ENCODE measurements at regions of chr10 and their contacts with region 1.

Region 1: GRCh38 chr10:86535057-86535882 is 13.7 kb upstream of the WAPL start:
- DNase-seq: peak; percentile 83 to 96
- ATAC-seq: peak; percentile 72 to 73
- H3K4me3 ChIP-seq: peak overlapping the region; percentile 53 to 66 (median 58)
- H3K27ac ChIP-seq: peak overlapping the region; percentile 91 to 93 (median 92)
- H3K4me1 ChIP-seq: peaks cover 21% of the 10 kb centered on the region in 2 donors
- H3K27me3 ChIP-seq: no peaks in the 10 kb centered on the region
- CTCF ChIP-seq: no peak
- POLR2A ChIP-seq: peak; percentile 33 to 38

Region 2: GRCh38 chr10:86017841-86018734 is 517.2 kb before region 1 on chr10:
- in situ Hi-C with region 1: no loop called
- intact Hi-C with region 1: loop called (anchors 5 kb)
- DNase-seq: peak; percentile 43 to 44
- ATAC-seq: peak; percentile 61 to 91
- H3K4me3 ChIP-seq: no peak overlapping the region
- H3K27ac ChIP-seq: peak overlapping the region in 1 of 4 donors; percentile 67
- H3K4me1 ChIP-seq: peaks cover 9 to 27% of the 10 kb centered on the region in 2 donors
- H3K27me3 ChIP-seq: no peaks in the 10 kb centered on the region
- CTCF ChIP-seq: no peak
- POLR2A ChIP-seq: no peak

Region 3: DNA sequence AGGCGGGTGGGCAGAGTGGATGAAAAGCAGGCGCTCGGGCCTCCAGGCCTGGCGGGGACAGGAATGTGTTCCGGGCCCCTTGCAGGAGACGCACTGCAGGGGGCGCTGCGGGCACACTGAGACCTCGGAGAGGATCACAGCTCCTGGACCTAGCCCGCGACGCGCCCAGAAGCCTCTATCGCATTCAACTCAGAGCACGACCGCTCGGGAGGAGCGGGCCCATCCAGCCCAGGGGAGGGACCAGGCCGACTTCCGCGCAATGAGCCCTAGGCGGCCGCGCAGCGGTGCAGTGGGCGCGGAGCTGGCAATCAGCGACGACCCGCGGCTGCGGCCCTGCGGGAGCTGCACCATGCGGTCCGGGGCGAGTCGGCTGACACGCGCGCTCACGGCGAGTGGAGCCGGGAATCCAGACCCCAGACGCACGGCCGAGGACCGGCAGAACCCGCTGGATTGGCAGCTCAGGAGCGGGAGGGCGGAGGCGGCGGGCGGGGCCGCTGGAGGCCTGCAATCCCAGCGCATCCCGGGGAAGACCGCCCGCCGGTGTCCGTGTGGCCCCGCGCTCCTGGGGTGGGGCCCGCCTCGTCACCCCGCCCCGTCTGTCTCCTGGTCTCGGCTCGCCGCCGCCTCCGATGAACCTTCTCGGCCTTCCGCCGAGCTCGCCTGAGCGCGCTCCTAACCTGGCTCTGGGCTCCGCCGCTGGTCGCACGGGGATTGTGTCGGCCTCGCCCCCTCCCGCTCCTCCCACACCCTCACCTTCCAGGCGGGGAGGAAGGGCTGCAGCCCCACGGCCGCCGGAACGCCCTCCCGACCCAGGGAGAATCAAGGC is 135.2 kb before region 1 on chr10:
- in situ Hi-C with region 1: no loop called
- intact Hi-C with region 1: no loop called
- DNase-seq: peak; percentile 77 to 83
- ATAC-seq: peak; percentile 89 to 94
- H3K4me3 ChIP-seq: peak overlapping the region; percentile 56 to 92 (median 67)
- H3K27ac ChIP-seq: peak overlapping the region in 3 of 4 donors; percentile 48 to 76 (median 52)
- H3K4me1 ChIP-seq: peaks cover 11 to 29% of the 10 kb centered on the region in 2 donors
- H3K27me3 ChIP-seq: peaks cover 5 to 13% (median 13%) of the 10 kb centered on the region in 3 donors
- CTCF ChIP-seq: peak; percentile 87 to 96 (median 90)
- POLR2A ChIP-seq: no peak

Region 4: GRCh38 chr10:86439544-86439943 is 95.7 kb before region 1 on chr10:
- in situ Hi-C with region 1: no loop called
- intact Hi-C with region 1: loop called (anchors 2 kb)
- DNase-seq: peak; percentile 78 to 96
- ATAC-seq: peak; percentile 98 to 99
- H3K4me3 ChIP-seq: no peak overlapping the region
- H3K27ac ChIP-seq: peak overlapping the region; percentile 55 to 69 (median 62)
- H3K4me1 ChIP-seq: peaks cover 12 to 17% of the 10 kb centered on the region in 2 donors
- H3K27me3 ChIP-seq: no peaks in the 10 kb centered on the region
- CTCF ChIP-seq: peak in 3 of 5 experiments; percentile 21 to 24 (median 22)
- POLR2A ChIP-seq: no peak

Region 5: GRCh38 chr10:86668297-86669165 is 133.3 kb after region 1 on chr10 and contains the start of gene LDB3:
- in situ Hi-C with region 1: no loop called
- intact Hi-C with region 1: loop called (anchors 5 kb)
- DNase-seq: peak; percentile 91 to 97
- ATAC-seq: peak; percentile 48 to 56
- H3K4me3 ChIP-seq: peak within 1 kb of the TSS; percentile 51 to 79 (median 69)
- H3K27ac ChIP-seq: peak within 1 kb of the TSS; percentile 98 to 100 (median 99)
- H3K4me1 ChIP-seq: peaks cover 86 to 98% of the 10 kb centered on the region in 2 donors
- H3K27me3 ChIP-seq: no peaks in the 10 kb centered on the region
- CTCF ChIP-seq: no peak
- POLR2A ChIP-seq: peak; percentile 92 to 98
- total RNA-seq, gene LDB3: 164 to 305 (median 227) TPM

Region 6: DNA sequence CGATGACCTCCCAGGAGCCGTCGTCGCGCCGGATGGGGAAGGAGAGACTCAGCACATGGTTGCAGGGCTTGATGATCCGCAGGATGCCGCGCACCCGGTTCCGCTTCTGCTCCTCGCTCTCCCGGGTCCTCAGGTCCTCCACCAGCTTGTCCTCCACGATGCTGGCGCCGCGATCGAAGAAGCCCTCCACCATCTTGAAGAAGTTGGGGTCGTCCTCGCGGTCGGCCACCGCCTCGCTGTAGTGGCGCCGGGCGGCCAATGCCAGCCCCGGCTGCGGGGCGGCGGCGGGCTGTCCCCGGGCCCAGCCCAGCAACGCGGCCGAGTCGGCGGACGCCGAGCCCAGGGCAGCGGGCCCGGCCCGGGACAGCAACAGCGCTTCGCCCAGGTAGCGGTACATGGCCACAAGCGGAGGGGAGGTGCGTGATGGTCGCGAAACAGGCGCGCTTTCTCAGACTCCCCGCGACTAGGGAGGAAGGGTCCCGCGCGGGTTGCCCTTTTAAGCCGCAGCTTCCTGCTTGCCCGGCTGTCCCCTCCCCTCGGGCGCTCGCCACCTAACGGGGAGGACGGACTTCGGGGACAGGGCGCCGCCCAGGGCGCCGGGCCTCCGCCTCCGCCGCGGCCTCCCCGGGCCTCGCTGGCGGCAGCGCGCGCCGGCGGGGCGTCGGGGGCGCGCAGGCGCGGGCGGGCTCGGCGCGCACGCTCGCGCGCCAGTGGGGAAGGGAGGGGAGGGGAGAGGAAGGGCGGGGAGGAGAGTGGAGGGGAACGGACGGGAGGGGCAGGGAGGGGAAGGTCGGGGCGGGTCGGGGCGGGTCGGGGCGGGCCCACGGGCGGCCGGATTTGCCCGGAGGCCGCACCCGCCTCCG is 559.3 kb after region 1 on chr10 and contains the starts of genes GLUD1 and SHLD2:
- in situ Hi-C with region 1: no loop called
- intact Hi-C with region 1: loop called (anchors 10 kb)
- DNase-seq: peak; percentile 88 to 89
- ATAC-seq: peak; percentile 83 to 87
- H3K4me3 ChIP-seq: peak within 1 kb of the TSS; percentile 82 to 94 (median 86)
- H3K27ac ChIP-seq: peak within 1 kb of the TSS; percentile 95 to 99 (median 97)
- H3K4me1 ChIP-seq: peaks cover 12 to 30% of the 10 kb centered on the region in 2 donors
- H3K27me3 ChIP-seq: no peaks in the 10 kb centered on the region
- CTCF ChIP-seq: peak in 1 of 5 experiments; percentile 19
- POLR2A ChIP-seq: peak; percentile 82 to 84
- total RNA-seq, gene GLUD1: 69.2 to 80.1 (median 77.2) TPM
- total RNA-seq, gene SHLD2: 7.2 to 15.2 (median 12.3) TPM